ENCODE measurements at regions of chr2 and their contacts with region 1.

Region 1: DNA sequence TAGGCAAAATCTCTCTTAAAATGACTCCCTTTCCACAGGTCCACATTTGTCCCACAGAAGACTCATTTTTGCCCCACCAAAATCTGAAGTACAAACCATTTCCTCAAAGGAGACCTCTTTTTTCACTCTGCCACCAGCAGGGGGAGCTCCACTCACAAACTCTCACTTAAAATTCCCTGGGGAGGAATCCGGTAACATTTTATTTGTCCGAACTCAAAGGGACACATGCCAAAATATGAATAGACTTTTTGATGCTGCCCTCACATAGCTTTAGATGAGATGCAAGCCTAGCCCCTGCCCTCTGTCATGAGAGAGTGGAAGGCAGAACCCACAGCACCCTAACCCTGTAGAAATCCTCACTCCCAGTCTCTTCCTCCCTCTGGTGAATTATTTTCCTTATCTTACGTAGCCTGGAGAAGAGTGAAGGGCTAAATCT is 57.1 kb downstream of the RMDN2 start:
- DNase-seq: peak; percentile 27 to 70 (median 36)
- ATAC-seq: peak; percentile 59; the same call in 2 of the 3 replicates
- H3K4me3 ChIP-seq: no peak overlapping the region
- H3K27ac ChIP-seq: no peak overlapping the region
- H3K4me1 ChIP-seq: 0 out of 5 replicates have a peak, but pooled peaks cover 0 to 4% of the 10 kb centered on the region in 2 experiments
- H3K27me3 ChIP-seq: no peaks in the 10 kb centered on the region; a peak in 1 of 5 replicates
- CTCF ChIP-seq: peak; percentile 63 to 80 (median 77); a peak in 5 of 6 replicates
- EP300 ChIP-seq: no peak
- POLR2A ChIP-seq: no peak
- RAD21 ChIP-seq: peak; percentile 69 to 76

Region 2: GRCh38 chr2:36626756-36627155 is 1355.4 kb before region 1 on chr2:
- CTCF ChIA-PET with region 1: no interaction called
- POLR2A ChIA-PET with region 1: no interaction called
- in situ Hi-C with region 1: no loop called
- intact Hi-C with region 1: no loop called
- DNase-seq: no peak
- ATAC-seq: no peak
- H3K4me3 ChIP-seq: no peak overlapping the region
- H3K27ac ChIP-seq: no peak overlapping the region
- H3K4me1 ChIP-seq: no peaks in the 10 kb centered on the region
- H3K27me3 ChIP-seq: no peaks in the 10 kb centered on the region
- CTCF ChIP-seq: no peak
- EP300 ChIP-seq: no peak
- POLR2A ChIP-seq: no peak
- RAD21 ChIP-seq: no peak

Region 3: GRCh38 chr2:37802899-37803379 is 179.2 kb before region 1 on chr2:
- CTCF ChIA-PET with region 1: no interaction called
- POLR2A ChIA-PET with region 1: no interaction called
- in situ Hi-C with region 1: no loop called
- intact Hi-C with region 1: no loop called
- DNase-seq: no peak
- ATAC-seq: no peak
- H3K4me3 ChIP-seq: no peak overlapping the region
- H3K27ac ChIP-seq: no peak overlapping the region
- H3K4me1 ChIP-seq: no peaks in the 10 kb centered on the region
- H3K27me3 ChIP-seq: no peaks in the 10 kb centered on the region; a peak in 1 of 5 replicates
- CTCF ChIP-seq: no peak
- EP300 ChIP-seq: no peak
- POLR2A ChIP-seq: no peak
- RAD21 ChIP-seq: no peak

Region 4: DNA sequence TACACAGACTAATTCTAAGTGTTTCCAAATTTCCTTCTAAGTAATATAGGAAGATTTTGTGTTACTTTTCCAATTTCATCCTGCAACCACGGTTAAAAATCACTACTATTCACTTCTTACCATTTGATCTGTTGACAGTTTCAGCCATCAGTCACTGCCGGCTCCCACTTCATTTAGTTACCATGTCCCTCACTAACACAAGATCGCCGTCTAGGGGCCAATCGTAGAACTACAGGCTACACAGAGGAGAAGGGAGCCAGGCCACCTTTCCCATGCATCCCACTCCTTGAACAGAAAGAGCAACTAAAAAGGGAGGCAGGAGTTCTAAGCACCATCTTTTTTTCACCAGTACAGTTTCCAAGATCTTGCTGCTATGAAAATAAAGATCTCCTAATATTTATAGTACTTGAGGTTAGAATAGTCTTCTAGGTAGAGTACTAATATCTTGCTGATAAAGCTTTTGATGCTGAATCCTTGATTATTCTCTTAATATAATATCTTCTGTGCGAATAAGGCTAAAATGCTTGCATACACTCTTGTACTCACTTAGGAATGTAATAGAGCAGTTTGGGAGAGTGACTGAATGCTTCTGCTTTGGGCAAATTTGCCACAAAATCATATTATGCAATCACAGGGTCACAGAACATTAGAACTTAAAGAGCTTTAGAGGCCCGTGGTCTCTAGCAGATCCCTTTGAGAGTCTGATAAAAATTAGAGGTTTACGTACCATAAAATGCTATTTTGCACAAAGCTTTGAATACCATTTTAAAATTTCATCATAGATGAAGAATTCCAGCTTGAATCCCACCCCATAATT is 133.3 kb after region 1 on chr2:
- CTCF ChIA-PET with region 1: interaction called, 8 read pairs
- POLR2A ChIA-PET with region 1: no interaction called
- in situ Hi-C with region 1: no loop called
- intact Hi-C with region 1: loop called (anchors 1 kb)
- DNase-seq: peak; percentile 76 to 81 (median 78)
- ATAC-seq: peak; percentile 92
- H3K4me3 ChIP-seq: no peak overlapping the region
- H3K27ac ChIP-seq: no peak overlapping the region
- H3K4me1 ChIP-seq: no peaks in the 10 kb centered on the region
- H3K27me3 ChIP-seq: peaks cover 2 to 11% of the 10 kb centered on the region in 2 experiments; a peak in 3 of 5 replicates
- CTCF ChIP-seq: peak; percentile 86 to 93 (median 89)
- EP300 ChIP-seq: no peak
- POLR2A ChIP-seq: no peak
- RAD21 ChIP-seq: peak; percentile 90

Region 5: GRCh38 chr2:38274286-38275276 is 292.4 kb after region 1 on chr2:
- CTCF ChIA-PET with region 1: interaction called, 10 read pairs
- POLR2A ChIA-PET with region 1: no interaction called
- in situ Hi-C with region 1: loop called (anchors 10 kb)
- intact Hi-C with region 1: loop called (anchors 1 kb)
- DNase-seq: peak; percentile 47 to 67 (median 54)
- ATAC-seq: peak; percentile 82
- H3K4me3 ChIP-seq: no peak overlapping the region
- H3K27ac ChIP-seq: no peak overlapping the region
- H3K4me1 ChIP-seq: no peaks in the 10 kb centered on the region; a peak in 1 of 5 replicates
- H3K27me3 ChIP-seq: peaks cover 7 to 10% of the 10 kb centered on the region in 2 experiments; a peak in 3 of 5 replicates
- CTCF ChIP-seq: peak; percentile 46 to 84 (median 64); a peak in 5 of 6 replicates
- EP300 ChIP-seq: no peak
- POLR2A ChIP-seq: no peak
- RAD21 ChIP-seq: peak; percentile 95 to 96

Region 6: DNA sequence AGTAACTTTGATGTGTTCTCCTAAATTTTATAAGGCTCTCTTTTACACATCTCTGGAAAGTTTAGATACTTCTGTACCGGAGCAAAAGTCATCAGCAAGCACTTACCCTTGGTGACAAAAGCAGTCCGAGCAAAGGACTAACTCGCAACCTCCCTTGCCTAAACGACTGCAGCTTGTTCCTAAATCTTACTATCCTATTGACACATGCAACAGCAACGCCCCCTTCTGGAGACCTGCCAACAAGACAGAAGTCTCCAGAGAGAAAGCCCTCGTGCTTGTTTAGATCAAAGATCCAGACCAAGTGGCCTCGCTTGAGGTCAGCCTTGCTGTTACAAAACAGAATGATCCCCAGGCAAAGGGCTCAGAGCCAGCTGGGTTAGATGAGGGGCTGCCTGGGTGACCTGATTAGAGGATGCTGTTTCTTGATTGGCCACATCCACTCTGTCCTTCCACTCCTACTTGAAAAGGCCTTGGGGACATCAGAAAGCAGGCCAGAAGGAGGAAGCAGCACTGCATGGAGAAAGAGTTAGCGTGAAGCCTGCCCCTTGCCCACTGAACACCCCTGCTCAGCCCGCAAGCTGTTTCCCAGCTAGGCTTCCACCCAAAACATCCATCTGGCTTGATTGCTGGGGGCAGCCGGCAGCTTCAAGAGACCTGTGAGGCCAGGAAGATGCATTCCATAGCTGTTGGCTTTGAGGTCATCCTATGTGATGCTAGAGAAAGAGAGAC is 526.3 kb after region 1 on chr2:
- CTCF ChIA-PET with region 1: no interaction called
- POLR2A ChIA-PET with region 1: no interaction called
- in situ Hi-C with region 1: no loop called
- intact Hi-C with region 1: loop called (anchors 1 kb)
- DNase-seq: peak; percentile 79 to 95 (median 80)
- ATAC-seq: peak; percentile 87
- H3K4me3 ChIP-seq: no peak overlapping the region
- H3K27ac ChIP-seq: peak overlapping the region; percentile 21; the same call in 1 of the 3 replicates
- H3K4me1 ChIP-seq: peaks cover 15 to 27% of the 10 kb centered on the region in 2 experiments
- H3K27me3 ChIP-seq: no peaks in the 10 kb centered on the region
- CTCF ChIP-seq: peak; percentile 78 to 88 (median 87)
- EP300 ChIP-seq: 0 out of 2 replicates have a peak, but pooled peaks have one; percentile 18
- POLR2A ChIP-seq: no peak
- RAD21 ChIP-seq: peak; percentile 85 to 90

Measured in K562 (cell line).